ENCODE measurements at regions of chr2 and their contacts with region 1.

Region 1: DNA sequence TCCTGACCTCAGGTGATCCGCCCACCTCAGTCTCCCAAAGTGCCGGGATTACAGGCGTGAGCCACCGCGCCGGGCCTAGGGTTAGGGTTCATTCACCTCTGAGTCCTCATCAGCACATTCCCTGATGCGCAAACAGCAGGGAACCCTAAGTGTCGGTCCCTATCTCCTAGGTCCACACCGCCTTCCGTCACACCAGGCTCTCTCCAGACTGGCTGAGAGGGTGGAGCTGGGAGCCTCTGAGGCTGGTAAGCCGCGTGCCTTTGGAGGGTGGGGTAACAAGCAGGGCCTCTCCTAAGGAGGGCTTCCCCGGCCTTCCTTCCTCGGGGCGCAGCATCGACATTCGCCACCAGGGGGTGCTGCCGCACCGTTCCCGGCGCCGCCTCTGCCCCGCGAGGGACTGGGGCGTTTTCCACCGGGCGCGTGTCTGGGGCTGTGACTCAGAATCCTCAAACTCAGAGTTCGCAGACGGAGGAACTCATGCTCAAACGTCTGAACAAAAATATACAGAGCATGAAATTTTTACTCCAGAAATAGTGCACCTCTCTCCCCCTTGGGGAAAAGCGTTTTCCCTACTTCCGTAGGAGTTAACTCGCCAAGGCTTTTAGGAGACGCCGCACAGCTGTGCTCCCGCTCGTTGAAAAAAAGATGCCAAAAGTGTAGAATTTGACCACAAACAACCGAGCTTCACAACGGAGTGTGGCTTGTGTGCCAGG is 63.9 kb upstream of the ASAP2 start:
- DNase-seq: peak; percentile 80 to 83 (median 81)
- ATAC-seq: peak; percentile 85
- H3K4me3 ChIP-seq: no peak overlapping the region
- H3K27ac ChIP-seq: no peak overlapping the region
- H3K4me1 ChIP-seq: peaks cover 8% of the 10 kb centered on the region
- H3K27me3 ChIP-seq: no peaks in the 10 kb centered on the region
- CTCF ChIP-seq: peak; percentile 96 to 99 (median 98)
- POLR2A ChIP-seq: no peak

Region 2: GRCh38 chr2:9347411-9347881 is 204.7 kb after region 1 on chr2:
- intact Hi-C with region 1: loop called (anchors 10 kb)
- DNase-seq: peak; percentile 33 to 58 (median 58)
- ATAC-seq: peak; percentile 75
- H3K4me3 ChIP-seq: no peak overlapping the region
- H3K27ac ChIP-seq: peak overlapping the region; percentile 50 to 72 (median 56)
- H3K4me1 ChIP-seq: peaks cover 15% of the 10 kb centered on the region
- H3K27me3 ChIP-seq: no peaks in the 10 kb centered on the region
- CTCF ChIP-seq: peak in 2 of 7 experiments; percentile 2 to 5
- POLR2A ChIP-seq: no peak

Region 3: DNA sequence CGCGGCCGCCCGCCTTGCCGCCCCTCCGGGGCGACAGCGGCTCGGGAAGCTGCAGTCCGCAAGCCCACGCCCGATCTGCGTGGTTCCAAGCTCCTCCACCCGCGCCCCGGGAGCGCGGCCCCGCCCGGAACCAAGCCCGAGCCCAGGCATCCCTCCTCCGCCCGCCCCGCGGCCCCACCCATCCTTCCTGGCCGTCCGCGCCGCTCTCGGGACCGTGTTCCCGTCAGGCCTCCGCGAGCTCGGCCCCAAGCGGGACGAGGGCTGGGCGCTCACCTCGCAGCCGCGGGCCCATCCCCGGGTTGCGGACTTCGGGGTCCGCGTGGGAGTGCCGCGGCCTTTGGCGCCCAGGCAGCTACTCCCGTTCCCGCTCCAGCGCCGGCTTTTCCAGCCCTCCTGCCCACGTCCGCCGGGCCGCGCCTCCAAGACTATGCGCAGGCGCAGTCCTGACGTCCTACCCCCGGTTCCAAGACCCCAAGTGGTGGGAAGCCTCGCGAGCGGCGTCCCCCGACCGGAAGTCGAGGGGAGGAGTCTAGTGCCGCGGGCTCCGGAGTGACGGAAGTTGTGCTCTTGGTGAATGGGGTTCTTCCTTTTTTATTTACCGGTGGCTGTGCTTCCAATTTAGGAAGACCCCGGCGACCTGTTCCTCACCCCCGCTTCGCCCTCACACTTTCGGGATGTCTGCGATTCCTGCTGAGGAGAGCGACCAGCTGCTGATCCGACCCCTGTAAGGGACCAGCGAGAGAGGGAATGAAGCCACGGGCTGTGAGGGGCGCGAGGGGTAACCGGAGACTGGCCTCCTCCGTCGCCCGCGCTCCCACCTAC is 280.6 kb after region 1 on chr2 and contains the starts of genes CPSF3 and ITGB1BP1:
- intact Hi-C with region 1: loop called (anchors 5 kb)
- DNase-seq: peak; percentile 97 to 98 (median 97)
- ATAC-seq: peak; percentile 97
- H3K4me3 ChIP-seq: peak within 1 kb of the TSS; percentile 85 to 93
- H3K27ac ChIP-seq: peak within 1 kb of the TSS; percentile 68 to 87 (median 82)
- H3K4me1 ChIP-seq: peaks cover 19% of the 10 kb centered on the region
- H3K27me3 ChIP-seq: no peaks in the 10 kb centered on the region
- CTCF ChIP-seq: peak in 3 of 7 experiments; percentile 20 to 32 (median 30)
- POLR2A ChIP-seq: peak in 2 of 3 donors; percentile 55 to 58
- total RNA-seq, gene CPSF3: 11.2 to 84.0 TPM
- total RNA-seq, gene ITGB1BP1: 16.6 to 28.3 TPM

Measured in body of pancreas (tissue), 4 donors.